ENCODE measurements at regions of chrX and their contacts with region 1.

Region 1: DNA sequence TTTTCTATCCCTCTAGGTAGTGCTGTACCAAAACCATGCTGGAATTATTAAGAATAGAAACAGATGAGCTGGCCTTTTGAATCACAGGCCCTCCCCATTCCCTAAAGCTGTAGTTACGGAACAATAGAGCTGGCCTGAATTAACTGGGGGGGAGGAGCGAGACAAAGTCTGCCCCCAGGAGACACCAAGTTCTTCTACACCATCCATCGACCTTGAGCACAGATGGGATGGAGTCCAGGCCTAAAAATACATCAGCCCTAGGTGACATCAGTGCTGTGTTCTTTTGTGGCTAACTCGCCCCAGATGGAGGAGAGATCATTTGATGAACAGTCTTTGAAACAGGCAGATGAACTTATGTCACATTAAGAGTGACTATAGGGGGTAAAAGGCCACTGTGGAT is 49.6 kb downstream of the LHFPL1 start:
- DNase-seq: no peak
- H3K4me3 ChIP-seq: no peak overlapping the region
- H3K27ac ChIP-seq: no peak overlapping the region
- H3K4me1 ChIP-seq: no peaks in the 10 kb centered on the region
- H3K27me3 ChIP-seq: no peaks in the 10 kb centered on the region
- CTCF ChIP-seq: no peak

Region 2: GRCh38 chrX:112380541-112381278 is 249.5 kb before region 1 on chrX:
- CTCF ChIA-PET with region 1: no interaction called
- POLR2A ChIA-PET with region 1: no interaction called
- intact Hi-C with region 1: no loop called
- DNase-seq: no peak
- H3K4me3 ChIP-seq: no peak overlapping the region
- H3K27ac ChIP-seq: no peak overlapping the region
- H3K4me1 ChIP-seq: no peaks in the 10 kb centered on the region
- H3K27me3 ChIP-seq: no peaks in the 10 kb centered on the region
- CTCF ChIP-seq: no peak

Region 3: DNA sequence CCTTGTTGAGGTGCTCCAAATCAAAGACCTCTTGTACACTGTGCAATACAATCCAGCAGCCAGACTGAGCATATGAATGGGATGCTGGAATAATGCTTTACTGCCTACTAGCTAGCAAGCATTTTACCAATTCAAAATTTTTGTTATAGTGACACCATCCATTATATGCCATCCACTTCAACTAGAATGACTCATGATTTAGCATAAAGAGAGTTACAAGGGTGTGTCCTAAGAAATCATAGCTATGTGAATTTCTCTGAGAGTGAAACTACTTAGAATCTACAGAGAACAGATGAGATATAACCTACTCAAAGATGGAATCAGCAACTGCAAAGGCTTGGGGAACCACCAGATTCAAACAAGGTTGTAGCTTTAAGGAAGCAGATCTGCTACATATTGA is 172.4 kb before region 1 on chrX:
- CTCF ChIA-PET with region 1: no interaction called
- POLR2A ChIA-PET with region 1: no interaction called
- intact Hi-C with region 1: no loop called
- DNase-seq: no peak
- H3K4me3 ChIP-seq: no peak overlapping the region
- H3K27ac ChIP-seq: no peak overlapping the region
- H3K4me1 ChIP-seq: no peaks in the 10 kb centered on the region
- H3K27me3 ChIP-seq: peaks cover 6% of the 10 kb centered on the region
- CTCF ChIP-seq: no peak

Region 4: GRCh38 chrX:112751078-112751477 is 120.9 kb after region 1 on chrX:
- CTCF ChIA-PET with region 1: no interaction called
- POLR2A ChIA-PET with region 1: interaction called, 23 read pairs
- intact Hi-C with region 1: no loop called
- DNase-seq: no peak
- H3K4me3 ChIP-seq: no peak overlapping the region
- H3K27ac ChIP-seq: no peak overlapping the region
- H3K4me1 ChIP-seq: no peaks in the 10 kb centered on the region
- H3K27me3 ChIP-seq: no peaks in the 10 kb centered on the region
- CTCF ChIP-seq: no peak